ENCODE measurements at regions of chr16 and their contacts with region 1.

Region 1: DNA sequence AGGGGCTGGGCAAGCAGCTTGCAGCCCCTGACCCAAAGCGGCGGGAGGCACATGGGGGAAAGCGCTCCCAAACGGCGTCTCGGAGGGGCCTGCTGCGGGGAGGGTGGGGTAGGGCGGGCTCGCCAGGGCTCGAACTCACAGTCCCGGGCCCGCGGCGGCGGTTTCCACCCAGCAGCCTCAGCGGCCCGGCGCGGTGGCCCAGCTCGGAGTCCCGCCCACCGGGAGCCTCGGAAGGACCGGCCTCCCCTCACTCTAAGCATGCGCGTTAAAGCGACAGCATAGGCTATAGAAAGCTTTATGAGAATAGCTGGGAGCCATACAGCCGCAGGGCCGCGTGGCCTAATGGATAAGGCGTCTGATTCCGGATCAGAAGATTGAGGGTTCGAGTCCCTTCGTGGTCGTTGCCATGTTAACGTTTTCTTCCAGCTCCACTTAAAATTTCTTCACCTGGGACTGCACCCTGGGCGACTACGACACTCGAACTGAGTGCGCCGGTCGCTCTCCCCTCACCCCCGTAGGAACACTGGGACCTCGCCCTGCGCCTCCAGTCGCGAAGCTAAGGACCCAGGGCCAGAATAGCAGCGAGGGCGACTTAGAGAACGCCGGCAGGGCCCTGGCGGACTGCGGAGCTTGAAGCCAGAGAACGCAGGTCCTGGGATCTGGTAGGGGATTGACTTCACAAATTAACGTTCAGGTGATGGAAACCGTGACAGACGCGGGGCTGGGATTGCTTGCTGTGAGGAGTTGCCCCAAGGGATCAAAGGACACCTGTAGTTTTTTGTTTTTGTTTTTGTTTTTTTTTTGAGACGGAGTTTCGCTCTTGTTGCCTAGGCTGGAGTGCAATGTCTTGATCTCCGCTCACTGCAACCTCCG is 15.8 kb downstream of the ZNF213 start:
- DNase-seq: peak; percentile 95
- ATAC-seq: peak; percentile 87
- H3K4me3 Mint-ChIP-seq: peak overlapping the region; percentile 88
- H3K27ac Mint-ChIP-seq: peak overlapping the region; percentile 91
- H3K4me1 Mint-ChIP-seq: peaks cover 25% of the 10 kb centered on the region
- H3K27me3 Mint-ChIP-seq: no peaks in the 10 kb centered on the region
- CTCF ChIP-seq: no peak

Region 2: GRCh38 chr16:2720719-2721633 is 429.6 kb before region 1 on chr16:
- CTCF ChIA-PET with region 1: no interaction called
- POLR2A ChIA-PET with region 1: no interaction called
- intact Hi-C with region 1: no loop called
- DNase-seq: peak; percentile 87
- ATAC-seq: peak; percentile 93
- H3K4me3 Mint-ChIP-seq: peak overlapping the region; percentile 81
- H3K27ac Mint-ChIP-seq: peak overlapping the region; percentile 53
- H3K4me1 Mint-ChIP-seq: peaks cover 5% of the 10 kb centered on the region
- H3K27me3 Mint-ChIP-seq: peaks cover 11% of the 10 kb centered on the region
- CTCF ChIP-seq: no peak

Region 3: GRCh38 chr16:2883027-2883851 is 267.3 kb before region 1 on chr16 and contains the start of gene FLYWCH2:
- CTCF ChIA-PET with region 1: no interaction called
- POLR2A ChIA-PET with region 1: no interaction called
- intact Hi-C with region 1: no loop called
- DNase-seq: peak; percentile 100
- ATAC-seq: peak; percentile 80
- H3K4me3 Mint-ChIP-seq: peak within 1 kb of the TSS; percentile 92
- H3K27ac Mint-ChIP-seq: peak within 1 kb of the TSS; percentile 98
- H3K4me1 Mint-ChIP-seq: peaks cover 18% of the 10 kb centered on the region
- H3K27me3 Mint-ChIP-seq: no peaks in the 10 kb centered on the region
- CTCF ChIP-seq: no peak
- total RNA-seq, gene FLYWCH2: 19.4 and 20.3 TPM in 2 replicates

Region 4: GRCh38 chr16:3123986-3124886 is 26.3 kb before region 1 on chr16:
- CTCF ChIA-PET with region 1: interaction called, 11 read pairs
- POLR2A ChIA-PET with region 1: interaction called, 23 read pairs
- intact Hi-C with region 1: loop called (anchors 1 kb)
- DNase-seq: peak; percentile 93
- ATAC-seq: peak; percentile 90
- H3K4me3 Mint-ChIP-seq: peak overlapping the region; percentile 98
- H3K27ac Mint-ChIP-seq: peak overlapping the region; percentile 96
- H3K4me1 Mint-ChIP-seq: peaks cover 35% of the 10 kb centered on the region
- H3K27me3 Mint-ChIP-seq: no peaks in the 10 kb centered on the region
- CTCF ChIP-seq: no peak

Region 5: DNA sequence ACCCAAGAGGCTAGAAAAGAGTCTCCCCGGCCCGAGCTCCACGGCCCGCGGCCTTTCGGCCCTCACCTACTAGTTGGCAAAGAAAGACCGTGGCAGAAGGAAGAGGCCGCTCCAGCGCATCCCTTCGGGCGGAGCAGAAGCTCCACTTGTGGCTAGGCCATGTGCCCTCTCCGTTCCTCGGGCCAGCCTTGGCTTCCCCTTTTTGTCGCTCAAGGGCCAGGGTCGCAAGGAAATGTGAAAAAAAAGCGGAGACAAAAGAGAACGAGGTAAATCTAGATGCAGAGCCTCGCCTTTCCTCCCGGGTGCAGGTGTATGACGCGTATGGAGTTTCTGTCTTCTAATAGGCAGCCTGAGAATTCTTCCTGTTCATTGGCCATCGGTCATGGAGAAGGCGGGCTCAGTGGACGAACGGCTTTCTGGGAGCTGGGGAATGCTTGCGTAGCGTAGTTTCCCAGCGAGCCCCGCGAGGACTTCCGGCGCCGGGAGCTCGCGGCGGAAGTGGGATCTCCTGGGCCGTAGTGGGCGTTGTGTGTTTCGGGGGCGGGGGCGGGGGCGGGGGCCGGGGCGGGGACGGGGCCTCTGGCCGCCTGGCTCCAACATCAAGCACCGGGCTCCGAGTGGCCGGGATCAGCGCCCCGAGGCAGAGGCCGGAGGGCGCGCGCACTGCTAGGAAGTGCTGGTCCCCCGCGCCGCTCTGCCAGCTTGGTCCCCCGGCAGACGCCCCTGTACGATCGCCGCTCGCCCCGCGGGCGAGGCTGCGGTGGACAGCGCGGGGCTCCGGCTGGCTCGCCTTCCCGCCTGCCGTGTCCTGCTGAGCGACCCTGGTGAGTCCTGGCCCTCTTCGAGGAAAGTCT is 15.8 kb before region 1 on chr16 and contains the start of gene ZNF213:
- CTCF ChIA-PET with region 1: interaction called, 11 read pairs
- POLR2A ChIA-PET with region 1: interaction called, 59 read pairs
- intact Hi-C with region 1: loop called (anchors 1 kb)
- DNase-seq: peak; percentile 81
- ATAC-seq: peak; percentile 99
- H3K4me3 Mint-ChIP-seq: peak within 1 kb of the TSS; percentile 97
- H3K27ac Mint-ChIP-seq: peak within 1 kb of the TSS; percentile 97
- H3K4me1 Mint-ChIP-seq: peaks cover 24% of the 10 kb centered on the region
- H3K27me3 Mint-ChIP-seq: no peaks in the 10 kb centered on the region
- CTCF ChIP-seq: no peak
- total RNA-seq, gene ZNF213: 5.6 and 5.7 TPM in 2 replicates

Region 6: DNA sequence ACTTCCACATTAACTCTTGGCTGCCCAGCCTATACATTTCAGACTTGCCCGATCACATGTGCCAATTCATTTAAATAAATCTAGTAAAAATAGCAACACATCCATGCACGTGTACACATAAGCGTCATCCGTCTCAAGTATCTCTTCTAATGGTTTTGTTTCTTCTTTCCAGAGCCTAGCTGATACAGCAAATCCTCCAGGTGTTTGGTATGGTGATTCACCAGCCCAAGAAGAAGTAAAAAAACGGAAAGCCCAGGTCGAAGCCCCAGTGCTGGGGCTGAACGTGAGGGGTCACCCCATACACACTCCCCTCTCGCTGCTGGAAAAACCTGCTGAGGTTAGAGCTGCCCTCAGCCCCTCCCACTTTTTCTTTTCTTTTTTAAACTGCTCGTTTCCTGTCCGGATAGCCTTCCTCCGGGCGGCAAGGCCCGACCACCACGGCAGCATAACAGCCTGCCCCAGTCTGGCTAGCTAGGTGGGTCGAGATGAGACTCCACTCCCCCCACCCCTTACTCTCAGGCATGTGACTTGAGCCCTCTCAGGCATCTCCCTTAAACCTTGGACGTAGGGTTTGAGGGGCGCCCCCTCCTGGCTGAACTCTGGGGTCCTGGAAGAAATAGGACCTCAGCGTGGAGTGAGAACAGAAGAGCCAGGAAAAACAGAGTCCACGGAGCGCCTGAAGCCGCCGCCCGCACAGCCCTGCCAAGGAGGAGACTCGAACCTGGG is 23.5 kb after region 1 on chr16:
- CTCF ChIA-PET with region 1: interaction called, 3 read pairs
- POLR2A ChIA-PET with region 1: interaction called, 10 read pairs
- intact Hi-C with region 1: loop called (anchors 1 kb)
- DNase-seq: no peak
- ATAC-seq: peak; percentile 10
- H3K4me3 Mint-ChIP-seq: peak overlapping the region; percentile 24
- H3K27ac Mint-ChIP-seq: peak overlapping the region; percentile 12
- H3K4me1 Mint-ChIP-seq: peaks cover 31% of the 10 kb centered on the region
- H3K27me3 Mint-ChIP-seq: peaks cover 56% of the 10 kb centered on the region
- CTCF ChIP-seq: no peak

Region 7: GRCh38 chr16:3188925-3189825 is 38.6 kb after region 1 on chr16:
- CTCF ChIA-PET with region 1: no interaction called
- POLR2A ChIA-PET with region 1: interaction called, 8 read pairs
- intact Hi-C with region 1: loop called (anchors 2 kb)
- DNase-seq: no peak
- ATAC-seq: peak; percentile 21
- H3K4me3 Mint-ChIP-seq: peak overlapping the region; percentile 32
- H3K27ac Mint-ChIP-seq: peak overlapping the region; percentile 53
- H3K4me1 Mint-ChIP-seq: peaks cover 25% of the 10 kb centered on the region
- H3K27me3 Mint-ChIP-seq: peaks cover 71% of the 10 kb centered on the region
- CTCF ChIP-seq: no peak

Region 8: DNA sequence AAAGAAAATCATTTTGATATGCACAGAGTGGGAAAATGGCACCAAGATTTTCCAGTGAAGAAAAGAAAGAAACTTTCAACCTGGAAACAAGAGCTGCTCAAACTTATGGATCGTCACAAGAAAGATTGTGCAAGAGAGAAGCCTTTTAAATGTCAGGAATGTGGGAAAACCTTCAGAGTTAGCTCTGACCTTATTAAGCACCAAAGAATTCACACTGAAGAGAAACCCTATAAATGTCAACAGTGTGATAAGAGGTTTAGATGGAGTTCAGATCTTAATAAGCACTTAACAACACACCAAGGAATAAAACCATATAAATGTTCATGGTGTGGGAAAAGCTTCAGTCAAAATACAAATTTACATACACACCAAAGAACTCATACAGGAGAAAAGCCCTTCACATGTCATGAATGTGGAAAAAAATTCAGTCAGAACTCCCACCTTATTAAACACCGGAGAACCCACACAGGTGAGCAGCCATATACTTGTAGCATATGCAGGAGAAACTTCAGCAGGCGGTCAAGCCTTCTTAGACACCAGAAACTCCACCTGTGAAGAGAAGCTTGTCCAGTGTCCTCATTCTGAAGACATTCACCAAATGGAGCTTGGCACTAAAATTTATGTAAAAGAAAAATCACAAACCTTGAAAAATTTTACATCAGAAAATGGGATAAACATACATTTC is 166.9 kb after region 1 on chr16:
- CTCF ChIA-PET with region 1: no interaction called
- POLR2A ChIA-PET with region 1: no interaction called
- intact Hi-C with region 1: no loop called
- DNase-seq: no peak
- ATAC-seq: no peak
- H3K4me3 Mint-ChIP-seq: no peak overlapping the region
- H3K27ac Mint-ChIP-seq: no peak overlapping the region
- H3K4me1 Mint-ChIP-seq: no peaks in the 10 kb centered on the region
- H3K27me3 Mint-ChIP-seq: no peaks in the 10 kb centered on the region
- CTCF ChIP-seq: no peak

Region 9: GRCh38 chr16:3503523-3503922 is 352.9 kb after region 1 on chr16:
- CTCF ChIA-PET with region 1: no interaction called
- POLR2A ChIA-PET with region 1: no interaction called
- intact Hi-C with region 1: loop called (anchors 1 kb)
- DNase-seq: no peak
- ATAC-seq: no peak
- H3K4me3 Mint-ChIP-seq: peak overlapping the region; percentile 15
- H3K27ac Mint-ChIP-seq: no peak overlapping the region
- H3K4me1 Mint-ChIP-seq: peaks cover 29% of the 10 kb centered on the region
- H3K27me3 Mint-ChIP-seq: no peaks in the 10 kb centered on the region
- CTCF ChIP-seq: no peak